MCF 10A (cell line): ENCODE measurements at regions of chr5 and their contacts with region 1.

Region 1: DNA sequence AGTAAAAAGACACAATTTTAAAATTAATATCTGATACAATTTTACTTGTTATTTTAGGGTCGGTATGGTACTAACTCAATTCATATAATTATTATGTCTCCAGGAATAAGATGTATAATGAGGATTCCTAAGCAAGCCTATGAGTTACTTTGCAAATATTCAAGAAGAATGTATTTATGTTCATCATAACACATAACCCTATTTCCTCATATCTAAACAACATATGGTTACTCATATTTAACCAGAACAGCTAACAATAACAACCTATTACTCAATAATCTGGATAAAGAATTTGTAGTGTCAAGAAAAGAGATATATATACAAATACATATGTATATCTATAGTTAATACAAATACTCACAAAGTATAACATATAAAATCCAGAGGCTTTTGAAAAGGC is 285.9 kb downstream of the ARL15 start:
- DNase-seq: peak; percentile 47
- H3K4me3 Mint-ChIP-seq: no peak overlapping the region
- H3K27ac Mint-ChIP-seq: peak overlapping the region; percentile 63
- H3K4me1 Mint-ChIP-seq: peaks cover 16% of the 10 kb centered on the region
- H3K27me3 Mint-ChIP-seq: no peaks in the 10 kb centered on the region
- CTCF ChIP-seq: no peak

Region 2: GRCh38 chr5:53991942-53992341 is 32.5 kb before region 1 on chr5:
- CTCF ChIA-PET with region 1: no interaction called
- POLR2A ChIA-PET with region 1: no interaction called
- intact Hi-C with region 1: loop called (anchors 1 kb)
- DNase-seq: peak; percentile 23
- H3K4me3 Mint-ChIP-seq: no peak overlapping the region
- H3K27ac Mint-ChIP-seq: no peak overlapping the region
- H3K4me1 Mint-ChIP-seq: peaks cover 7% of the 10 kb centered on the region
- H3K27me3 Mint-ChIP-seq: no peaks in the 10 kb centered on the region
- CTCF ChIP-seq: peak; percentile 22

Region 3: GRCh38 chr5:54049963-54050362 is 25.5 kb after region 1 on chr5:
- CTCF ChIA-PET with region 1: no interaction called
- POLR2A ChIA-PET with region 1: no interaction called
- intact Hi-C with region 1: no loop called
- DNase-seq: no peak
- H3K4me3 Mint-ChIP-seq: no peak overlapping the region
- H3K27ac Mint-ChIP-seq: no peak overlapping the region
- H3K4me1 Mint-ChIP-seq: peaks cover 2% of the 10 kb centered on the region
- H3K27me3 Mint-ChIP-seq: no peaks in the 10 kb centered on the region
- CTCF ChIP-seq: no peak